Activated B cell treated with CpG ODN at 0.5 μM for 24 hours (primary cell): ENCODE measurements at regions of chr14 and their contacts with region 1.

Region 1: GRCh38 chr14:32076278-32077080 is 625 bp upstream of the ARHGAP5 start:
- DNase-seq: peak; percentile 82
- ATAC-seq: peak; percentile 68
- H3K4me3 Mint-ChIP-seq: peak overlapping the region; percentile 93
- H3K27ac Mint-ChIP-seq: peak overlapping the region; percentile 98
- H3K4me1 Mint-ChIP-seq: peaks cover 33% of the 10 kb centered on the region
- H3K27me3 Mint-ChIP-seq: no peaks in the 10 kb centered on the region
- CTCF ChIP-seq: no peak

Region 2: GRCh38 chr14:30558675-30559555 is 1517.6 kb before region 1 on chr14 and contains the start of gene G2E3:
- CTCF ChIA-PET with region 1: no interaction called
- POLR2A ChIA-PET with region 1: no interaction called
- intact Hi-C with region 1: loop called (anchors 2 kb)
- DNase-seq: peak; percentile 88
- ATAC-seq: peak; percentile 99
- H3K4me3 Mint-ChIP-seq: peak within 1 kb of the TSS; percentile 100
- H3K27ac Mint-ChIP-seq: peak within 1 kb of the TSS; percentile 98
- H3K4me1 Mint-ChIP-seq: peaks cover 29% of the 10 kb centered on the region
- H3K27me3 Mint-ChIP-seq: no peaks in the 10 kb centered on the region
- CTCF ChIP-seq: no peak
- total RNA-seq, gene G2E3: 23.5 and 32.6 TPM in 2 replicates

Region 3: GRCh38 chr14:31070431-31070830 is 1006.0 kb before region 1 on chr14:
- CTCF ChIA-PET with region 1: no interaction called
- POLR2A ChIA-PET with region 1: interaction called, 13 read pairs
- intact Hi-C with region 1: no loop called
- DNase-seq: no peak
- ATAC-seq: no peak
- H3K4me3 Mint-ChIP-seq: no peak overlapping the region
- H3K27ac Mint-ChIP-seq: no peak overlapping the region
- H3K4me1 Mint-ChIP-seq: no peaks in the 10 kb centered on the region
- H3K27me3 Mint-ChIP-seq: no peaks in the 10 kb centered on the region
- CTCF ChIP-seq: no peak

Region 4: DNA sequence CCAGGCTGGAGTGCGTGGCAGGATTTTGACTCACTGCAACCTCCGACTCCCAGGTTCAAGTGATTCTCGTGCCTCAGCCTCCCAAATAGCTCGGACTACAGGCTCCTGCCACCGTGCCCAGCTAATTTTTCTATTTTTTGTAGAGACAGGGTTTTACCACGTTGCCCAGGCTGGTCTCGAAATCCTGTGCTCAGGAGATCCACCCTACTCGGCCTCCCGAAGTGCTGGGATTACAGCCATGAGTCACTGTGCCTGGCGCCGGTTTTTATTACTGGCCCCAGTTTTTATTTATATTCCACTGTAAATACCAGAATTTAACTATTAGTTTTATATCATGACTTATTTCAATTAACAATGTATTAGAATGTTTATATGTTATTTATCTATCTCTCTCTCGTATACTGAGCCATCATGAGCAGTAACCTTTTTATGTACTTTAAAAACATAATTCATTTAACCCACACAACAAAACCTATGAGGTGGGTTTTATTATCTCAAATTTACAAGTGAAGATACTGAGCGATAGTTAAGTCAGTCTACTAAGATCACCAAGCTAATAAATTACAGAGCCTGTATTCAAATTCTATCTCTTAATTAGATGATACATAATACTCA is 916.7 kb before region 1 on chr14:
- CTCF ChIA-PET with region 1: no interaction called
- POLR2A ChIA-PET with region 1: no interaction called
- intact Hi-C with region 1: no loop called
- DNase-seq: no peak
- ATAC-seq: no peak
- H3K4me3 Mint-ChIP-seq: no peak overlapping the region
- H3K27ac Mint-ChIP-seq: no peak overlapping the region
- H3K4me1 Mint-ChIP-seq: no peaks in the 10 kb centered on the region
- H3K27me3 Mint-ChIP-seq: no peaks in the 10 kb centered on the region
- CTCF ChIP-seq: no peak

Region 5: DNA sequence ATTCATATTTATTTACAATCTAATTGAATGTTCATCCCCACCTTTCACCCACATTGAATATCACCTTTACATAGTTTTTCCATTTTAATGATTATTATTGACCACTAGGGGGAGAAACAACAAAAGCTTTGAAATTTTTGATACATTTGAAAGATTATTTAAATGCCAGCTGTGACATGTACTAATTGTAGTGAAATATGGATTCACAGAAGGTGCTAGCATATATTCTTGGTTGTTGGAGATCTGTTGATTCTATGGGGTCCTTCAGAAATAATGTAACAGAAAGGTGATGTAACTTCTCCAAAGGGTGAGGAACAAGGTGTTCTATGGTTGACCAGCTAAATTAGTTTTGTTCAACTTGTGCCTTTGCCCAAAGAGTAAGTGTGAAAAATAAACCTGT is 566.3 kb before region 1 on chr14:
- CTCF ChIA-PET with region 1: interaction called, 6 read pairs
- POLR2A ChIA-PET with region 1: interaction called, 5 read pairs
- intact Hi-C with region 1: loop called (anchors 1 kb)
- DNase-seq: no peak
- ATAC-seq: no peak
- H3K4me3 Mint-ChIP-seq: no peak overlapping the region
- H3K27ac Mint-ChIP-seq: no peak overlapping the region
- H3K4me1 Mint-ChIP-seq: no peaks in the 10 kb centered on the region
- H3K27me3 Mint-ChIP-seq: no peaks in the 10 kb centered on the region
- CTCF ChIP-seq: peak; percentile 36

Region 6: DNA sequence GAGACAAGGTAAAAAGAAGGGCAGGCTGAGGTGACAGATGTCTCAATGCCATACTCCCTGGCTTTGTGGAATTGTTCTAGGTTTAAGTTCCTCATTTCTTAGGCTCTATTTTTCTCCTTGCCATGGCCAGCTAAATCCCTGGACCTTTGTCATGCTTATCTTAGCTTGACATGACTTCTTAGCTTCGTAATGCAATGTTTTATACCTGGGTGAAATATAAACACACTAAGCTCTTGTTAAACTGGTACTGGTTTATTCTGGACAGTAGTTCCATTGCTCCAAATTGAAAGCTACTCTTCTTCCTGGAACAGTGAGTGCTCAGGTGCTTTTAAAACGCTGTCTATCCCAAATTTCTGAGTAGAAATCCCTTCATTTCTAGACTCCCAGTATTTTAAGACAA is 16.8 kb before region 1 on chr14:
- CTCF ChIA-PET with region 1: no interaction called
- POLR2A ChIA-PET with region 1: no interaction called
- intact Hi-C with region 1: no loop called
- DNase-seq: no peak
- ATAC-seq: no peak
- H3K4me3 Mint-ChIP-seq: no peak overlapping the region
- H3K27ac Mint-ChIP-seq: no peak overlapping the region
- H3K4me1 Mint-ChIP-seq: no peaks in the 10 kb centered on the region
- H3K27me3 Mint-ChIP-seq: peaks cover 3% of the 10 kb centered on the region
- CTCF ChIP-seq: no peak

Region 7: GRCh38 chr14:32087173-32087861 is 10.8 kb after region 1 on chr14:
- CTCF ChIA-PET with region 1: interaction called, 4 read pairs
- POLR2A ChIA-PET with region 1: interaction called, 12 read pairs
- intact Hi-C with region 1: loop called (anchors 1 kb)
- DNase-seq: no peak
- ATAC-seq: no peak
- H3K4me3 Mint-ChIP-seq: no peak overlapping the region
- H3K27ac Mint-ChIP-seq: no peak overlapping the region
- H3K4me1 Mint-ChIP-seq: peaks cover 20% of the 10 kb centered on the region
- H3K27me3 Mint-ChIP-seq: no peaks in the 10 kb centered on the region
- CTCF ChIP-seq: no peak

Region 8: GRCh38 chr14:32244404-32244803 is 167.9 kb after region 1 on chr14:
- CTCF ChIA-PET with region 1: interaction called, 14 read pairs
- POLR2A ChIA-PET with region 1: interaction called, 4 read pairs
- intact Hi-C with region 1: no loop called
- DNase-seq: no peak
- ATAC-seq: no peak
- H3K4me3 Mint-ChIP-seq: no peak overlapping the region
- H3K27ac Mint-ChIP-seq: no peak overlapping the region
- H3K4me1 Mint-ChIP-seq: no peaks in the 10 kb centered on the region
- H3K27me3 Mint-ChIP-seq: peaks cover 11% of the 10 kb centered on the region
- CTCF ChIP-seq: no peak

Region 9: GRCh38 chr14:32319362-32320049 is 243.0 kb after region 1 on chr14:
- CTCF ChIA-PET with region 1: no interaction called
- POLR2A ChIA-PET with region 1: no interaction called
- intact Hi-C with region 1: no loop called
- DNase-seq: no peak
- ATAC-seq: no peak
- H3K4me3 Mint-ChIP-seq: no peak overlapping the region
- H3K27ac Mint-ChIP-seq: no peak overlapping the region
- H3K4me1 Mint-ChIP-seq: no peaks in the 10 kb centered on the region
- H3K27me3 Mint-ChIP-seq: no peaks in the 10 kb centered on the region
- CTCF ChIP-seq: no peak